Heart left ventricle (tissue), 16 donors: ENCODE measurements at regions of chr15 and their contacts with region 1.

Region 1: GRCh38 chr15:72136170-72137051 is 18.2 kb downstream of the SENP8 start:
- DNase-seq: no peak
- ATAC-seq: no peak
- H3K4me3 ChIP-seq: no peak overlapping the region
- H3K27ac ChIP-seq: no peak overlapping the region
- H3K4me1 ChIP-seq: peaks cover 0 to 23% (median 2%) of the 10 kb centered on the region in 12 donors
- H3K27me3 ChIP-seq: no peaks in the 10 kb centered on the region
- CTCF ChIP-seq: no peak
- POLR2A ChIP-seq: no peak

Region 2: DNA sequence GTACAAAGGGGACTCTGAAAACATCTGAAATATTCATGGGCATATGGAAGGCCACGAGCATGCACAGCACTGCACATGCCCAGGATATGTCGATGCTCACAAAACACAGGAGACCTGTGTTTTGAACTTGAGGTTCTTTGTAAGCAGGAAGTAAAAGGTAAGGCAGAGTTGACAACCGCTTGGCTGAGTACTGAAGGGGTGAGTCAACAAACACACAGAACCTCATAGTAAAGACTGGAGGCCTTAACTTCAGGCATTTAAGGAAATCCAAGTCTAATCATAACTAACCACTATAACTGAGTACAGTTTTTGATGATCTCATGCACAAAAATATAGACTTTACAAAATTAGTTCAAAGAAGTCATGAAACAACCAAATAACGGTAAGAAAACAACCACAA is 99.1 kb before region 1 on chr15:
- intact Hi-C with region 1: loop called in 1 of 10 experiments (anchors 5 kb)
- DNase-seq: no peak
- ATAC-seq: no peak
- H3K4me3 ChIP-seq: no peak overlapping the region
- H3K27ac ChIP-seq: no peak overlapping the region
- H3K4me1 ChIP-seq: peaks cover 0 to 16% (median 7%) of the 10 kb centered on the region in 12 donors
- H3K27me3 ChIP-seq: no peaks in the 10 kb centered on the region
- CTCF ChIP-seq: no peak
- POLR2A ChIP-seq: no peak

Region 3: GRCh38 chr15:72117486-72118399 is 18.7 kb before region 1 on chr15 and contains the start of gene MYO9A:
- intact Hi-C with region 1: loop called in 1 of 10 experiments (anchors 2 kb)
- DNase-seq: peak; percentile 97 to 99 (median 98)
- ATAC-seq: peak; percentile 89 to 93 (median 91)
- H3K4me3 ChIP-seq: peak within 1 kb of the TSS; percentile 74 to 97 (median 90)
- H3K27ac ChIP-seq: peak within 1 kb of the TSS; percentile 88 to 99 (median 97)
- H3K4me1 ChIP-seq: peaks cover 0 to 35% (median 24%) of the 10 kb centered on the region in 12 donors
- H3K27me3 ChIP-seq: no peaks in the 10 kb centered on the region
- CTCF ChIP-seq: peak in 7 of 12 donors; percentile 8 to 53 (median 19)
- POLR2A ChIP-seq: peak; percentile 28 to 75
- total RNA-seq, gene MYO9A: 23.9 to 33.9 (median 30.6) TPM